GM10248 (cell line): ENCODE measurements at regions of chr1 and their contacts with region 1.

Region 1: DNA sequence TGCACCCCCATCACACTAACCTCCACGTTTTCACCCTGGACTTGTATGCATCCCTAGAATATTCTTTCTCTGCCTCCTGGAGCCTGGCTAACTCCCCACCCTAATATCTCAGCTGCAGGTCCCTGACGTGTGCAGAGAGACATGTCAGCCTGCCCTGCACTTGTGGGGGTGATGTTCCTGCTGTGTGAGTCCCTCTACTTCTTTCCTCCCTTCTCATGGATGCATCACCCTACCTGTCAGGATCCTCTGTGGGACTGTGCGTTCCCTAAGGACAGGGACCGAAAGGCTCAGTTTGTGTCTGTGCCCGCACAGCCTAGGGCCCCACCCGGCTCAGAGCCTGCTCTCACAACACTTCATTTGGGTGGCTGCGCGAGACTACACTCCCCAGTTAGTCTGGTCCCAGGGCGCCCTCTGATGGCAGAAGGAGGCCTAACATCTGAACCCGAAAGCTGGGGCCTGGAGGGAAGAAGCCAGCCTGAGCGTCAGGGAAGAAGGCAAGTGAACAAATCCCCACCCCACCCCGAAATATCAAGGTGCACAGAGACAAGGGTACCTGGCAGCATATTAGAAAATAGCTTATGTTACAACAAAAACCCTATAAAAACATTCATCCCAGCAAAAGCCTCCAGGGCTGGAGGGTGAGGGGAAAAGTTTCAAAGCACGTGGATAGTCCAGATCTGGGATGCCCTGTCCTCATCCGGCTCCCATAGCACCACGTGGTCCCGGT is 3.7 kb downstream of the CD52 start:
- DNase-seq: peak; percentile 87
- CTCF ChIP-seq: peak; percentile 96

Region 2: GRCh38 chr1:26161415-26162219 is 159.9 kb before region 1 on chr1:
- CTCF ChIA-PET with region 1: no interaction called
- POLR2A ChIA-PET with region 1: no interaction called
- DNase-seq: no peak
- CTCF ChIP-seq: peak; percentile 26

Region 3: DNA sequence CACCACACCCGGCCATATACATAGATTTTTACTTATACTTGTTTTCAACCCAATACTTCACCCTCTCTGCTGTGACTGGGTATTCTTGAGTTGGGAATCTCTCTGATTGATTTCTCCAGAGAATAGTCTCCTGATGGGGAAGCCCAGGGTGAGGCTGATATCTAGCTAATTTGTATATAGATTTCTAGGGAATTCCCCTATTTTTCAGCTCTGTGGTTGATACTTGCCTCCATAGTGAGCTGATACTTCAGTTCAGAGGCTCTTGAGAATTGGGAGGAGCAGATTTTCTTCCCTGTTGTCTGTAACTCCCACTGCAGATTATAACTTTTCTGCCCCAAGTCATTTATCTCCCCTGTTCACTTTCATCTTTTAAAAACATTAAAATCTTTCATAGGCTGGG is 56.1 kb before region 1 on chr1:
- CTCF ChIA-PET with region 1: interaction called, 12 read pairs
- POLR2A ChIA-PET with region 1: interaction called, 4 read pairs
- DNase-seq: no peak
- CTCF ChIP-seq: no peak

Region 4: DNA sequence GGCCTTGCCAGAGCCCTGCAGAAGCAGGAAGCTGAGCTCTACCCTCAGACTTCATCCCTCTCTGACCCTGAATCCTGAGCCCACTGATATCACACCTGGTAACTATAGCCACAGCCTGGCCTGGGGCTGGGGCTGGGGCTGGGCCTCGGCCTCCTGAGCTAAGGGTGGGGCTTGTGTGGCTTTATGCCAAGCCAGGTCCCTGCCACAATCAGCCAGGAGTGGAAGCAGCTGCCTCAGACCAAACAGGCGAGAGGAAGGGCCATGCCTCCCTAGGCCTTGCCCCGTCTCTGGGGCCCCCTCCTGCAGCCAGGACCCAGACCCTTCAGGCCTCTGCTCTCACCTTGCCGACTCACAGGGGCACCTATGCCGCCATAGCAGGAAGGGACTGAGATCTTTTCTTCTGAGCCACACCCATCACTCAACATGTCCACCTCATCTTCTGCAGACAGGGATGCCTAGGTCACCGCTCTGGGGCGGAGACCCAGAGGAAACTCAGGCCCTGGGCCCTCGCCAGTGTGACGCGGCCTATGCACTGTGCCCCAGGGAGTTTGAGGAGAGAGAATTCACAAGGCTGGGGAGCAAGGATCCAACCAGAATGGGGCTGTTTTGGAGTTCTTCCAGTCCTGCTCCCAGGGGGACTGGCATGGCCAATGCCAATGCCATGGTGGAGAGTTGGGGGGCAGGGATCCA is 20.7 kb before region 1 on chr1:
- CTCF ChIA-PET with region 1: interaction called, 17 read pairs
- POLR2A ChIA-PET with region 1: interaction called, 5 read pairs
- DNase-seq: no peak
- CTCF ChIP-seq: no peak

Region 5: GRCh38 chr1:26335774-26336476 is 14.4 kb after region 1 on chr1:
- CTCF ChIA-PET with region 1: interaction called, 24 read pairs
- POLR2A ChIA-PET with region 1: no interaction called
- DNase-seq: no peak
- CTCF ChIP-seq: no peak